ENCODE measurements at regions of chr6 and their contacts with region 1.

Region 1: GRCh38 chr6:100257793-100258395 is 206.8 kb downstream of the SIM1 start:
- DNase-seq: no peak
- ATAC-seq: peak; percentile 89
- H3K4me3 Mint-ChIP-seq: peak overlapping the region; percentile 74
- H3K27ac Mint-ChIP-seq: peak overlapping the region; percentile 83
- H3K4me1 Mint-ChIP-seq: peaks cover 29% of the 10 kb centered on the region
- H3K27me3 Mint-ChIP-seq: peaks cover 3% of the 10 kb centered on the region

Region 2: DNA sequence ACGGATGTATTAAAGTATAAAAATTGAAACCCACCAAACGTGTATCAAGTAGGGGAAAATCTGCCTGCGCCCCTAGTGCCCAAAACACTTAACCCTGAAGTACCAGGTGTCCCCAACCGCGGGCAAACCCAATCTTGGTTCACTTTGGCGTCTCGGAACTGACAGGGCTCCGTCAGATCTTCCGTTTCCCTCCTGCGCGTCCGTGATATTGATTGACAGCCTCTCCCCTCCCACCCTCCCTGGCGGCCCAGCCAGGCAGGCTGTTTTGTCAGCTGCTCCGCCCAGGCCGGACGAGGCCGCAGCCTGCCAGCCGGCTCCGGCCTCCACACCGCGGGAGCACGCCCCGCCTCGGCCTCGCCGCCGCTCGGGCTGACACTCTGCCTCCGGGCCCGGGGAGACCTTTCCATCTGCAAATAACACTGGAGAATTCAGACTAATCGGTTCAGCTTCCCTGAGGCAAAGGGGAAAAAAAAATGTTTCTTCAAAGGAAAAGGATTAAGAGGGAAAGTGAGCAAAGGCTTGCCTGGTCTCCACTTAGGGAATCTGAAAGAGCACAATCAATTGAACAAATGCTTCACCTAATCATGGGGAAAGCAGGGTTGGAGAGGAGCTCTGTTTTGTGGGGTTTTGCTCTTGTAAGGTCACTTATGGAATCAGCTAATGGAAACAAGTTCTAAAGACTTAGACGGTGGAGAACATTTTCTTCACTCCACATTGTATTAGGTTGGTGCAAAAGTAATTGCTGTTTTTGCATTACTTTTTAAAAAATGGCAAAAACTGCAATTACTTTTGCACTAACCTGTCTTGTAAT is 28.9 kb before region 1 on chr6:
- CTCF ChIA-PET with region 1: interaction called, 11 read pairs
- DNase-seq: peak; percentile 90
- ATAC-seq: peak; percentile 94
- H3K4me3 Mint-ChIP-seq: peak overlapping the region; percentile 73
- H3K27ac Mint-ChIP-seq: peak overlapping the region; percentile 80
- H3K4me1 Mint-ChIP-seq: peaks cover 36% of the 10 kb centered on the region
- H3K27me3 Mint-ChIP-seq: peaks cover 17% of the 10 kb centered on the region